Colonic mucosa (tissue), 4 donors: ENCODE measurements at regions of chr2 and their contacts with region 1.

Region 1: DNA sequence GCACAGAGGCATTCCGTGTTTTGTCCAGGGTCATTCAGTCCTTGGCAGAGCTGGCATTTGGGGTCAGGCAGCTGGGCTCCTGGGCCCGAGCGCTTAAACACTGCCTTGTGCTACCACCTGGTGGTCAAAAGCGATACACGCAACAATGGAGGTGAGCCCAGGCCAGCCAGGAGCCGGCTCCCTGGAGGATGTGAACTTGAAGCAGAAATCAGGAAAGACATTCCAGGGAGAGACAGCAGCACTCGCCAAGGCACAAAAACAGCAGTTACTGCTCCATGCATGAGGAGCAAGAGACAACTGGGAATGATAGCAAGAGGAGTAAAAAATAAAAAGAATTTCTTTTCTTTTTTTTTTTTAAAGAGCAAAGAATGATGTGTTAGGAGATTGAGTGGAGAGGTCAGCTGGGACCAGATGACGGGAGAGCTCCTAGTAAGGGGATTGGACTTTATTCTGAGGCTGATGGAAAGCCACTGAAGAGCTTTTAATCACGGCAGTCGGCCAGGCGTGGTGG is 20.7 kb downstream of the SCYGR8 start:
- DNase-seq: peak; percentile 88
- H3K4me3 ChIP-seq: no peak overlapping the region
- H3K27ac ChIP-seq: no peak overlapping the region
- H3K4me1 ChIP-seq: no peaks in the 10 kb centered on the region
- H3K27me3 ChIP-seq: no peaks in the 10 kb centered on the region
- CTCF ChIP-seq: peak; percentile 92

Region 2: GRCh38 chr2:227471924-227472264 is 294.5 kb before region 1 on chr2 and contains the start of gene AGFG1:
- intact Hi-C with region 1: loop called (anchors 10 kb)
- DNase-seq: peak; percentile 90
- H3K4me3 ChIP-seq: peak within 1 kb of the TSS; percentile 92
- H3K27ac ChIP-seq: peak within 1 kb of the TSS; percentile 90
- H3K4me1 ChIP-seq: peaks cover 11% of the 10 kb centered on the region
- H3K27me3 ChIP-seq: no peaks in the 10 kb centered on the region
- CTCF ChIP-seq: peak; percentile 98
- total RNA-seq, gene AGFG1: 83.3 to 101 TPM

Region 3: GRCh38 chr2:227661019-227661649 is 105.3 kb before region 1 on chr2:
- intact Hi-C with region 1: loop called (anchors 2 kb)
- DNase-seq: no peak
- H3K4me3 ChIP-seq: no peak overlapping the region
- H3K27ac ChIP-seq: no peak overlapping the region
- H3K4me1 ChIP-seq: no peaks in the 10 kb centered on the region
- H3K27me3 ChIP-seq: no peaks in the 10 kb centered on the region
- CTCF ChIP-seq: no peak